Activated T-helper 1 cell treated with anti-CD3 and anti-CD28 coated beads, Interleukin-12 subunit alpha, Interleukin-12 subunit beta, Interleukin-2, Interleukin-4 antibody, amounts not matched to agents 30 ng/mL and 10 ng/mL and 1 ng/mL, durations not matched to agents 14 hours and 24 hours and 36 hours (primary cell): ENCODE measurements at regions of chr16 and their contacts with region 1.

Region 1: DNA sequence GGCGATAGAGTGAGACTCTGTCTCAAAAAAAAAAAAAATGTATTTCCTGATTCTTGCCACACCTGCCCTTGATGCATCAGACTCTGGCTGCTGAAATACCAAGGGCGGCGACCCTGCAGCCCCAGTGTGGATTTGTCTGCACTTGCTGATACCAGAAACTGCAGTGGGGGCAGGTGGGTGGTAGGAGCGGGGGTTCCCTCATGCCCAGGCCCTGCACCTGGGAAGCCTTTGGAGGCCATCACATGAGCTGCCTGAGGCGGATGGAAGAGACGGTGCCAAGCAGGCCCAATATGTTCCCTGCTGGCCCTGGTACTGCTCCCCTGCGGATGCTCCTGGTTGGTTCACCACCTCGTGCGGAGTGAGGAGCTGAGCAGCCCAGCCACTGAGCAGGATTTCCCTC is 50.6 kb downstream of the MARF1 start:
- DNase-seq: no peak
- H3K4me3 Mint-ChIP-seq: no peak overlapping the region
- H3K27ac Mint-ChIP-seq: peak overlapping the region; percentile 61
- H3K4me1 Mint-ChIP-seq: peaks cover 64% of the 10 kb centered on the region
- H3K27me3 Mint-ChIP-seq: no peaks in the 10 kb centered on the region

Region 2: DNA sequence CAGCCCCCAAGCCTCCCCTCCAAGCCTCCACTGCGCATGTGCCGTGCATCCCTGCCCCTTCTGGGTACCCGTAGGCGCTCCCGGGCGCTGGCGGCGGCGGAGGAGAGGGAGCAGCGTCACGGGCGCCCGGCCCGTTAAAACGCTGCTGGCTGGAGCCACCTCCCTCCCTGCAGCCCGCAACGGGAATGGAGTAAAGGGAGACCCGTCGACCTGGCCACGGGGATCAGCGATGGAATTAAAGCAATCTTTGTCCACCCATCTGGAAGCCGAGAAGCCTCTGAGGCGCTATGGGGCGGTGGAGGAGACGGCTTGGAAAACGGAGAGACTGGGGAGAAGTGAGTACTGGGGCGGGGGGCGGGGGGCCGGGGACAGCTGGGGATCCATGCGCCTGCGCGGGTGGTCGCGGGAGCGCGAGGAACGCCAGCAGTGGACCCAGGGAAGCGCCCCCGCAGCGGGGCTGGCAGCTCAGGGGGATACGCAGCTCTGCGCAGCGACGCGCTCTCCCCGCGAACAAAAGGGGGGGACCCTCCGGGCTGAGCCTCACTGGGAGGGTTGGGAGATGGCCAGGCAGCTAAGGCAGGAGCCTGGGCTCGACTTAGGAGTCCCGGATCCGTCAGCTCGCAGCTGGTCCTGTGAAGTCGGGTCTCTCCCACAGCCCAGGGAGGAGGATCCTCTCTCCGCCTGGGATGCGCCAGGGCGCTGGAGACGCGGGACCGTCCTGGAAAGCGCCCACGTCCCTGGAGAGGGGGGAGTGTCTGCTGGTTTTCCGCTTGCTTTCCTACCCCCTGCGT is 157.7 kb before region 1 on chr16 and contains the start of gene BMERB1:
- intact Hi-C with region 1: loop called (anchors 5 kb)
- DNase-seq: peak; percentile 31
- H3K4me3 Mint-ChIP-seq: peak within 1 kb of the TSS; percentile 93
- H3K27ac Mint-ChIP-seq: peak within 1 kb of the TSS; percentile 52
- H3K4me1 Mint-ChIP-seq: peaks cover 17% of the 10 kb centered on the region
- H3K27me3 Mint-ChIP-seq: peaks cover 23% of the 10 kb centered on the region
- total RNA-seq, gene BMERB1: 16.0 and 17.4 TPM in 2 replicates

Region 3: GRCh38 chr16:15466886-15467781 is 125.2 kb before region 1 on chr16:
- intact Hi-C with region 1: no loop called
- DNase-seq: no peak
- H3K4me3 Mint-ChIP-seq: no peak overlapping the region
- H3K27ac Mint-ChIP-seq: no peak overlapping the region
- H3K4me1 Mint-ChIP-seq: peaks cover 6% of the 10 kb centered on the region
- H3K27me3 Mint-ChIP-seq: peaks cover 2% of the 10 kb centered on the region

Region 4: GRCh38 chr16:15509593-15510535 is 82.5 kb before region 1 on chr16:
- intact Hi-C with region 1: loop called (anchors 1 kb)
- DNase-seq: no peak
- H3K4me3 Mint-ChIP-seq: no peak overlapping the region
- H3K27ac Mint-ChIP-seq: no peak overlapping the region
- H3K4me1 Mint-ChIP-seq: peaks cover 20% of the 10 kb centered on the region
- H3K27me3 Mint-ChIP-seq: no peaks in the 10 kb centered on the region

Region 5: GRCh38 chr16:15572329-15573001 is 19.9 kb before region 1 on chr16:
- intact Hi-C with region 1: loop called (anchors 1 kb)
- DNase-seq: no peak
- H3K4me3 Mint-ChIP-seq: no peak overlapping the region
- H3K27ac Mint-ChIP-seq: peak overlapping the region; percentile 69
- H3K4me1 Mint-ChIP-seq: peaks cover 27% of the 10 kb centered on the region
- H3K27me3 Mint-ChIP-seq: no peaks in the 10 kb centered on the region

Region 6: GRCh38 chr16:15607700-15608396 is 15.5 kb after region 1 on chr16:
- intact Hi-C with region 1: no loop called
- DNase-seq: no peak
- H3K4me3 Mint-ChIP-seq: no peak overlapping the region
- H3K27ac Mint-ChIP-seq: no peak overlapping the region
- H3K4me1 Mint-ChIP-seq: peaks cover 14% of the 10 kb centered on the region
- H3K27me3 Mint-ChIP-seq: no peaks in the 10 kb centered on the region

Region 7: GRCh38 chr16:15690296-15690695 is 98.0 kb after region 1 on chr16:
- intact Hi-C with region 1: no loop called
- DNase-seq: no peak
- H3K4me3 Mint-ChIP-seq: no peak overlapping the region
- H3K27ac Mint-ChIP-seq: no peak overlapping the region
- H3K4me1 Mint-ChIP-seq: no peaks in the 10 kb centered on the region
- H3K27me3 Mint-ChIP-seq: no peaks in the 10 kb centered on the region

Region 8: GRCh38 chr16:15961060-15961511 is 368.8 kb after region 1 on chr16:
- intact Hi-C with region 1: loop called (anchors 2 kb)
- DNase-seq: peak; percentile 76
- H3K4me3 Mint-ChIP-seq: peak overlapping the region; percentile 47
- H3K27ac Mint-ChIP-seq: peak overlapping the region; percentile 95
- H3K4me1 Mint-ChIP-seq: peaks cover 63% of the 10 kb centered on the region
- H3K27me3 Mint-ChIP-seq: no peaks in the 10 kb centered on the region

Region 9: DNA sequence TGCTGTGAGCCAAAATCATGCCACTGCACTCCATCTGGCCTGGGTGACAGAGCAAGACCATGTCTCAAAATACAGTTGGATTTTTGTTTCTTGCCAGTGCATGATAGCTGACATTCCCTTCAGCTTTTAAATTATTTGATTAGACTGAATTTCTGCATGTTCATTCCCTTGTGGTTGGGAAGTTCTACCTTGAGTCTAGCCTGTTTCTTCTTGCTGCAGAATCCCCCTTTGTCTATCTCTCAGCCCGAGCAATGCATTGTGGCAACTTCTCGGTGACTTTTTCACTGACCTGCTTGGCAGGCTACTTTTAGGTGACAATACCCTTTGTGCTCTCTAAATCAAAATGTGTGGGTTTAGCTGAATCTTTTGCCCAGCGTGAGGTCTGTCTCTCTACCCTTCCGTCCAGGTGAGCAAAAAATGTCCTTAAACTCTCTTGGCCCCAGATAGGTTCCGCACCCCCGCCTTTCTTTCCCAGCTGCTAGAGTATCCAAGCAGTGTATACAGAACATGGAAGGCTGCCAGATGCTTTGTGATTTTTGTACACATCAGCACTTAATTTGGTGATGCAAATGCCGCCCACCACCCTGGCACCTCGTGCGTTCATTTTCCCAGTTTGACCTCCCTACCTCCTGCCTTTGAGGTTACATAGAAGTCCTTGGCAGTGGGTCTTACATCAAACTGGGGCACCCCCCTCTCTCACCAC is 500.8 kb after region 1 on chr16:
- intact Hi-C with region 1: no loop called
- DNase-seq: no peak
- H3K4me3 Mint-ChIP-seq: no peak overlapping the region
- H3K27ac Mint-ChIP-seq: no peak overlapping the region
- H3K4me1 Mint-ChIP-seq: no peaks in the 10 kb centered on the region
- H3K27me3 Mint-ChIP-seq: no peaks in the 10 kb centered on the region